ENCODE measurements at regions of chr4 and their contacts with region 1.

Region 1: GRCh38 chr4:108834835-108835384 is 72.1 kb upstream of the ETNPPL start:
- DNase-seq: peak; percentile 67

Region 2: GRCh38 chr4:108589961-108590360 is 244.9 kb before region 1 on chr4:
- in situ Hi-C with region 1: no loop called
- DNase-seq: no peak

Region 3: GRCh38 chr4:109302361-109303139 is 467.6 kb after region 1 on chr4 and contains the start of gene COL25A1:
- in situ Hi-C with region 1: loop called (anchors 25 kb)
- DNase-seq: peak; percentile 83

Region 4: GRCh38 chr4:109433205-109434006 is 598.5 kb after region 1 on chr4 and contains the start of gene SEC24B:
- in situ Hi-C with region 1: no loop called
- DNase-seq: peak; percentile 88